ENCODE measurements at regions of chr3 and their contacts with region 1.

Region 1: DNA sequence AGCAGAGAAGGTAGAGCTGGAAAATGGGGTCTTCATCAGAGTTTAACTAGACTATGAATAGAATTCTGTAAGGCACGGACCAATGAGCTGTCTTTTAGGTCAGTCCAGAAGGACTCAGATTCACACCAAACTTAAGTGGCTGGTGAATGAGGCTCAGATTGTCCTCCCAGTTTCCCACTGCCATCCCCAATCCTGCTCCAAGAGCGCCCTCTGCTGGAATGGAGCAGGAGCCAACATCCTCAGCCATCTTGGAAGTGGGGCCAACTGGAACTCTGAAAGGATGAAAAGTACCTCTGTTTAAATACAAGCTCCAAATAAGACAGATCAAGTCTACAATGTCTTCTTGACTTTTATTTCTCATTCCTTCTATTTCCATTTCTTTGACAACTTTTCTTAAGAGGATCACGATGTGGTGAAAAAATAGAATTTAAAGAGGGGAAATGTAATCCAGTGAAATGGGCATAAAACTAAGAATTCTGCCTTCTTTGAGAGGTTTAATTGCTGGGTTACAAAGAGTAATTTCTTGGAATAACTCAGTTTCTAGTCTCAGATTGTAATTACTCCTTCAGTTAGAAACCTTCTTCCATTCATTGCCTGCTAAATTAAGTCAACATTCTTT is 217.1 kb upstream of the TPRG1 start:
- DNase-seq: peak; percentile 58 to 84
- ATAC-seq: peak; percentile 72 to 83
- H3K4me3 ChIP-seq: no peak overlapping the region
- H3K27ac ChIP-seq: peak overlapping the region; percentile 18 to 35; a peak in 2 of 6 replicates
- H3K4me1 ChIP-seq: peaks cover 28% of the 10 kb centered on the region
- CTCF ChIP-seq: peak; percentile 85
- EP300 ChIP-seq: no peak
- POLR2A ChIP-seq: no peak
- RAD21 ChIP-seq: peak; percentile 96 to 99

Region 2: DNA sequence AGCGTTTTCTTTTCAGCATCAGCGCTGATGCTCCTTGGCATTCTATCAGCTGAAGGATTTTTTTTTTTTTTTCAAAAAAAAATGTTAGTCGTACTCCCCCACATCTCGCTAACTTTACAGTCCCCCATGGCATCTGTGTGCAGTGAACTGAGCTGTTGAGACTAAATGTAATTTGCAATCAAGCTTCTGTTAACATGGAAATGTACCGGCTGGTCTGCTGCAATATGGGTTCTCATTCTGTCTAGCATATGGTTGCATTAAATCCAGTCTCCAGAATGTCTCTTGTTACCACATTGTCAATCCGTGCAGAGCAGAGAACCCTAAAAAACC is 184.9 kb after region 1 on chr3:
- CTCF ChIA-PET with region 1: interaction called, 23 read pairs
- POLR2A ChIA-PET with region 1: no interaction called
- DNase-seq: no peak
- ATAC-seq: no peak
- H3K4me3 ChIP-seq: no peak overlapping the region
- H3K27ac ChIP-seq: no peak overlapping the region
- H3K4me1 ChIP-seq: no peaks in the 10 kb centered on the region
- CTCF ChIP-seq: no peak
- EP300 ChIP-seq: no peak
- POLR2A ChIP-seq: no peak
- RAD21 ChIP-seq: no peak

Region 3: GRCh38 chr3:189148081-189148507 is 193.4 kb after region 1 on chr3:
- CTCF ChIA-PET with region 1: interaction called, 23 read pairs
- POLR2A ChIA-PET with region 1: no interaction called
- DNase-seq: peak; percentile 26 to 53
- ATAC-seq: peak; percentile 76 to 87; a peak in 5 of 6 replicates
- H3K4me3 ChIP-seq: no peak overlapping the region
- H3K27ac ChIP-seq: no peak overlapping the region; a peak in 1 of 6 replicates
- H3K4me1 ChIP-seq: peaks cover 6% of the 10 kb centered on the region; the same call in 1 of the 3 replicates
- CTCF ChIP-seq: peak; percentile 73
- EP300 ChIP-seq: no peak
- POLR2A ChIP-seq: no peak
- RAD21 ChIP-seq: peak; percentile 73 to 83

Measured in A549 (cell line).